Astrocyte of the cerebellum (primary cell): ENCODE measurements at regions of chr15 and their contacts with region 1.

Region 1: GRCh38 chr15:27561816-27562215 is 537.3 kb downstream of the OCA2 start:
- DNase-seq: peak; percentile 20
- H3K4me3 ChIP-seq: no peak overlapping the region
- CTCF ChIP-seq: no peak

Region 2: GRCh38 chr15:27601239-27601960 is 39.6 kb after region 1 on chr15:
- in situ Hi-C with region 1: loop called (anchors 5 kb)
- DNase-seq: no peak
- H3K4me3 ChIP-seq: no peak overlapping the region
- CTCF ChIP-seq: no peak

Region 3: GRCh38 chr15:27660676-27661075 is 98.9 kb after region 1 on chr15:
- in situ Hi-C with region 1: no loop called
- DNase-seq: no peak
- H3K4me3 ChIP-seq: no peak overlapping the region
- CTCF ChIP-seq: no peak